ENCODE measurements at regions of chr10 and their contacts with region 1.

Region 1: GRCh38 chr10:73956476-73957359 is 41.2 kb upstream of the VCL start:
- DNase-seq: peak; percentile 59
- H3K4me3 Mint-ChIP-seq: peak overlapping the region; percentile 66
- H3K27ac Mint-ChIP-seq: peak overlapping the region; percentile 97
- H3K4me1 Mint-ChIP-seq: peaks cover 54% of the 10 kb centered on the region
- H3K27me3 Mint-ChIP-seq: no peaks in the 10 kb centered on the region

Region 2: DNA sequence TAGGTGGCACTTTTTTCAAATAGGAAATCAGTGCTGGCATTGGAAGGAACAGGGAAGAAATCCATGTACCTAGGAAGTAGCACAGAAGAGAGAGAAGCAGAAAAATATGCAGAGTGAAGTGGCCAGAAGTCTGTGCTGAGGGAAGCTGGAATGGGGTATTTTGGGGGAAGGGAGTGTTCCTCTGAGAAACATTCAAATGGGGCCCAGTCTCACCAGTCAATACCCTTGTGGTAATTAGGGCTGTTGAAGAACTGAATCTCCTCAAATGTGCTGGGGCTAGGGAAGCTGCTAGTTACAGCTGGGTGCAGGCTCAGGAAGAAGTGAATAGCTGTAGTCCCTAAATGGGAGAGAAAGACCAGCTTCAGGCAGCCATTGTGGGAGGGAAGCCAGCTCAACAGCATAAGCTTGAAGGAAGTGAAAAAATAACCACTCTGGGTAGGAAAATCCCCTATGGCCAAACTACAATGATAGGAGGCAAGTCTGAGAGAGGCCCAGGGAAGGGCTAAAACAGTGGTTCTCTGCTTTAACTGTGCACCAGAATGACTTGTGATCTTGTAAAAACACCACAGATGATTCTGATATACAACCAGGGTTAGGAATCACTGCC is 152.9 kb before region 1 on chr10:
- CTCF ChIA-PET with region 1: no interaction called
- POLR2A ChIA-PET with region 1: no interaction called
- DNase-seq: no peak
- H3K4me3 Mint-ChIP-seq: no peak overlapping the region
- H3K27ac Mint-ChIP-seq: peak overlapping the region; percentile 68
- H3K4me1 Mint-ChIP-seq: peaks cover 45% of the 10 kb centered on the region
- H3K27me3 Mint-ChIP-seq: no peaks in the 10 kb centered on the region

Region 3: DNA sequence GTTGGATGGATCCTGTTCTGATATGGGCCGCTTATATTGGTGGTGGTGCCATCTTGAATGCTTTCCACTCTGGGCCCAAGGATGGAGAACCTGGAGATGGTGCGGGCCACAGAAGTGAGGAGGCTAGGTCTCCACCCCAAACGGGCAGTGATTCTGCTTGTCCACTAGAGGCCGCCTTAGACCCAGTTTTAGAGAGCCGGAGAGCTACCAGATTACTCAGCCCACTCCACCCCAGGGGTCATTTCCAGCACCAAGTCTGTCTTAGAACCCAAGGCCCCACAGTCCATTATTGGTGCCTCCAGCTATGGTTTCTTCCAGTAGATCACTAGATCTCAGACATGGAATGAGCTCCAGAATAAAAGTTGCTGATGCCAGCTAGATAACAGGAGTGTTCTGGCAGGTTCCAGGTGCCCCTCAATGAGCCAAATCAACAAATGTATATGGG is 70.6 kb before region 1 on chr10:
- CTCF ChIA-PET with region 1: interaction called, 20 read pairs
- POLR2A ChIA-PET with region 1: interaction called, 6 read pairs
- DNase-seq: peak; percentile 74
- H3K4me3 Mint-ChIP-seq: no peak overlapping the region
- H3K27ac Mint-ChIP-seq: no peak overlapping the region
- H3K4me1 Mint-ChIP-seq: peaks cover 16% of the 10 kb centered on the region
- H3K27me3 Mint-ChIP-seq: no peaks in the 10 kb centered on the region

Region 4: DNA sequence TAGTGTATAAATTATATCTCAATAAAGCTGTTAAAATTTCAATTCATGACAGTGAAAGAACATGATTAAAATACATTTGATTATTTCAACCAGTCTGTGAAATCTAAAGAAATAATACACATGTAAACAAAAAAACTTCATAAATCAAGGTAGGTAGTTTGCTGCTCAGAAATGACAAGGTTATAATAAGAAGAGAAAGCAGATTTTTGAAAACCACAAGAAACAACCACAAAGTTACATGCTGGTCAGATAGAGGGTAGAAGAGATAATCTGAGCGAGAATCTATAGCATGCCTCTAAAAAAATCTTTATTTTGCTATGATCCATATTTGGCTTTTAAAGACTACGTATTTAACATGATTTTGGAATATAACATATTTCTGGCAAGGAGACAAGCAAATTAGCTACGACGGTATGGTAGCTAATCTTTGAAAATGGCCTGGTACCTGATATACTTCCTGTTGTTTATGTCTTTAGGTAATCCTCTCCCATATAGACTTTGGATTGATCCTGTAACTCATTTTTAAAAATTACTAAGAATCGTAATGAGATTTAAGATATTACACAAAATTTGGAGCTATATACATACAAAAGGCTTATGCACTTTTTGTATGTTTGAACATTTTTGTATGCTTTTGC is 17.7 kb after region 1 on chr10:
- CTCF ChIA-PET with region 1: interaction called, 21 read pairs
- POLR2A ChIA-PET with region 1: interaction called, 14 read pairs
- DNase-seq: no peak
- H3K4me3 Mint-ChIP-seq: peak overlapping the region; percentile 30
- H3K27ac Mint-ChIP-seq: peak overlapping the region; percentile 54
- H3K4me1 Mint-ChIP-seq: peaks cover 25% of the 10 kb centered on the region
- H3K27me3 Mint-ChIP-seq: peaks cover 7% of the 10 kb centered on the region

Region 5: GRCh38 chr10:73991884-73992245 is 35.1 kb after region 1 on chr10:
- CTCF ChIA-PET with region 1: interaction called, 29 read pairs
- POLR2A ChIA-PET with region 1: interaction called, 23 read pairs
- DNase-seq: peak; percentile 93
- H3K4me3 Mint-ChIP-seq: peak overlapping the region; percentile 24
- H3K27ac Mint-ChIP-seq: peak overlapping the region; percentile 84
- H3K4me1 Mint-ChIP-seq: peaks cover 57% of the 10 kb centered on the region
- H3K27me3 Mint-ChIP-seq: no peaks in the 10 kb centered on the region

Region 6: DNA sequence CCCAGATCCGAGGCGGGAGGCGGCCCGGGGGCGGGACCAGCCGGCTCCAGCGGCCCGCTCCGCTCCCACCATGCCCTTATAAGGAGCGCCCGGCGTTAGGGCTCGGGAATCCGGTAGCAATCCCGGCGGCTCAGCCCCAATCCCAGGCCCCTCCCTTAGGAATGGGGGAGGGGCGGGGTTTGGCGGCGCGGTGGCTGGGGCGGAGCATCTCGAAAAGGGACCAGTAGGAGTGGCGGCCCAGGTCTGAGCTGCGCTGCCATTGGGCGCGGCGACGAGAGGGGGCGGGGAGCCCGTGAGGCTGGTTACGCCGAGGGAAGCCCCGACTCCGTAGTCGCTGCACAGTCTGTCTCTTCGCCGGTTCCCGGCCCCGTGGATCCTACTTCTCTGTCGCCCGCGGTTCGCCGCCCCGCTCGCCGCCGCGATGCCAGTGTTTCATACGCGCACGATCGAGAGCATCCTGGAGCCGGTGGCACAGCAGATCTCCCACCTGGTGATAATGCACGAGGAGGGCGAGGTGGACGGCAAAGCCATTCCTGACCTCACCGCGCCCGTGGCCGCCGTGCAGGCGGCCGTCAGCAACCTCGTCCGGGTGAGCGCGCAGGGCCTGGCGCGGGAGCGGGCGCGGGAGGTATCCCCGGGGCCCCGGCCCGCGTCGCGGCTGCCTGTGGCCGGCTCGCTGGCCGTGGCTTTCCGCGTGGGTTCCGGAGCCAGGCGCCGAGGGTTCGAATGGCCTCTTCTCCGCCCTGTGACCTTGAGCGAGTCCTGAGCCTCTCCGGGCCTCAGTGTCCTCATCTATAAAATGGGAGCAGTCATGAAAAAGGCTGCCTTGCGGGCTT is 41.3 kb after region 1 on chr10 and contains the start of gene VCL:
- CTCF ChIA-PET with region 1: interaction called, 29 read pairs
- POLR2A ChIA-PET with region 1: interaction called, 16 read pairs
- DNase-seq: peak; percentile 95
- H3K4me3 Mint-ChIP-seq: peak within 1 kb of the TSS; percentile 96
- H3K27ac Mint-ChIP-seq: peak within 1 kb of the TSS; percentile 97
- H3K4me1 Mint-ChIP-seq: peaks cover 67% of the 10 kb centered on the region
- H3K27me3 Mint-ChIP-seq: no peaks in the 10 kb centered on the region
- total RNA-seq, gene VCL: 70.1 to 71.8 TPM

Region 7: GRCh38 chr10:74056036-74056818 is 99.5 kb after region 1 on chr10:
- CTCF ChIA-PET with region 1: interaction called, 6 read pairs
- POLR2A ChIA-PET with region 1: interaction called, 13 read pairs
- DNase-seq: peak; percentile 45
- H3K4me3 Mint-ChIP-seq: peak overlapping the region; percentile 49
- H3K27ac Mint-ChIP-seq: peak overlapping the region; percentile 88
- H3K4me1 Mint-ChIP-seq: peaks cover 72% of the 10 kb centered on the region
- H3K27me3 Mint-ChIP-seq: no peaks in the 10 kb centered on the region

Region 8: GRCh38 chr10:74081192-74081803 is 124.6 kb after region 1 on chr10:
- CTCF ChIA-PET with region 1: interaction called, 18 read pairs
- POLR2A ChIA-PET with region 1: interaction called, 3 read pairs
- DNase-seq: peak; percentile 45
- H3K4me3 Mint-ChIP-seq: no peak overlapping the region
- H3K27ac Mint-ChIP-seq: no peak overlapping the region
- H3K4me1 Mint-ChIP-seq: peaks cover 57% of the 10 kb centered on the region
- H3K27me3 Mint-ChIP-seq: no peaks in the 10 kb centered on the region

Measured in activated CD4-positive, alpha-beta memory T cell treated with anti-CD3 and anti-CD28 coated beads, Interleukin-2, amount 10 ng/mL, durations not matched to agents 7 days and 5 days (primary cell).